Right ventricle myocardium inferior (tissue), 1 donor: ENCODE measurements at regions of chr6 and their contacts with region 1.

Region 1: DNA sequence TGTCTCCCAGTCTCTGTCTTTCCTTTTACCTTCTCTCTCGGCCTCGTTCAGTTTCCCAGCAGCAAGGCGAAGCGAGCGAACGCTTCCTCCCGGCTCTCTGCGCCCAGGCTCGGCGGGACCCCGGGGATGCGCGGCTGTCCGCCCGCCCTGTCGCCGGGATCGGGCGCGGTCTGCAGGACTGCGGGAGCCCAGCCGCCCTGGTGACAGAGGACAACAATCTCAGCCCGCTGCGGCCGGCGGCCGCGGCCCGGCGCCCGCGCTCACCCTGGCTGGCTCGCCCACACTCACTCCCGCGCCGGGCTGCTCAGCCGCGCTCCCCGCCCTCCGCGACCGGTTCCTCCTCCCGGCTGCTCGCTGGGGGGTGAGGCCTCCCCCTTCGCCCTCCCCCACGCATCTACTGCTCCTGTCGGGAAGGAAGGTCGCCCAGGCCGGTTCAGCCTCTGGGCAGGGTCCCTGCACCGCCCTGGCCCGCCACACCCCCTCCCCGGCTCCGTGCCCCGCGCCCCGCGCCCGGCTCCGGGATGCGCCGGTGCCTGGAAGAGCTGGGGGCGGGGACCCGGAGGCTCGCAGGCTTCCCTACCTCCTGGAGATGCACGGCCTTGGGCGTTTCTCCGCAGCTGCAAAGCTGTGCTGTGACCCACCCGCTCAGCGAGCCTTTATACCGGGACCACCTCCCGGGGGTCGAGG is 410 bp downstream of the SYNE1 start:
- DNase-seq: peak; percentile 86
- ATAC-seq: peak; percentile 85

Region 2: GRCh38 chr6:152458648-152459644 is 177.8 kb before region 1 on chr6:
- intact Hi-C with region 1: no loop called
- DNase-seq: no peak
- ATAC-seq: no peak

Region 3: DNA sequence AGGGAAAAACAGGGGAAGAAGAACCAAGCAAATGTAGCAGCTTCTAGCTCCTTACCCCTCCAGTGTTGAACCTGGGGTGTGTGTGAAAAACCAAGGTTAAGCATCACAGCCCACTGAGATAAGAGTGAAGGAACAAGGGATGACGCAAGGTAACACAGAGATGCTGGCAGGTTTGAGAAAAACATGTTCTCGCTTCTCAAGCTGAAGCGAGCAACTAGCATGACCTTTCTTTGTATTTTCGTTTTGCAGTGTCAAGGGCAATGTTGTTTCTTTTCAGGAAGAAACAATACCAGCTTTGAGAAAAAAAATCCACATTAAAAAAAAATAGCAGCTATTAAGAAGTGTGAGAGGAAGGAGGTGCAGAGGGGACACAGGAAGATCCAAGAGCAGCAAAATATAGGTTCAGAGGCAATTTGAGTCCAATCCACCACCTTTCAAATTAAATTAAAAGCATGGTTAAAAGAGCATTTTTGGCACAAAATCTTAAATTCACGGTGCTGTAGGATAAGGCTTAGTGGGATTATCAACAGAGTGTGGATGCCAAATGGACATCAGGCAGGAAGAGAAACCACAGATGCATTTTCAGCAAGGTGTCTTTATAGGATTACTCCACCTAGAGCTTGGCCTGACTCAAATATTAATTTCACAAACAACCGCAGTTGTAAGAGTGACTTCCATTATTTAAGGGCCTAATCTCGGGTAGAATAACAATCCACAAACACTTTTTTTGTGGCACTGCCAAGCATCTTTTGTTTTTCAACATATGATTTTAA is 70.5 kb before region 1 on chr6:
- intact Hi-C with region 1: loop called (anchors 5 kb)
- DNase-seq: no peak
- ATAC-seq: no peak

Region 4: GRCh38 chr6:152605342-152605741 is 31.4 kb before region 1 on chr6:
- intact Hi-C with region 1: loop called (anchors 2 kb)
- DNase-seq: no peak
- ATAC-seq: no peak

Region 5: GRCh38 chr6:152651986-152652385 is 15.2 kb after region 1 on chr6:
- intact Hi-C with region 1: no loop called
- DNase-seq: no peak
- ATAC-seq: no peak